ENCODE measurements at regions of chr3 and their contacts with region 1.

Region 1: GRCh38 chr3:112136959-112137693 is 4.1 kb upstream of the GCSAM start:
- DNase-seq: peak; percentile 49
- ATAC-seq: peak; percentile 88
- H3K4me3 ChIP-seq: no peak overlapping the region
- H3K27ac ChIP-seq: no peak overlapping the region
- H3K4me1 ChIP-seq: no peaks in the 10 kb centered on the region; a peak in 1 of 4 replicates
- H3K27me3 ChIP-seq: no peaks in the 10 kb centered on the region
- CTCF ChIP-seq: peak; percentile 66 to 81 (median 78); a peak in 5 of 6 replicates
- POLR2A ChIP-seq: no peak
- RAD21 ChIP-seq: peak; percentile 83

Region 2: DNA sequence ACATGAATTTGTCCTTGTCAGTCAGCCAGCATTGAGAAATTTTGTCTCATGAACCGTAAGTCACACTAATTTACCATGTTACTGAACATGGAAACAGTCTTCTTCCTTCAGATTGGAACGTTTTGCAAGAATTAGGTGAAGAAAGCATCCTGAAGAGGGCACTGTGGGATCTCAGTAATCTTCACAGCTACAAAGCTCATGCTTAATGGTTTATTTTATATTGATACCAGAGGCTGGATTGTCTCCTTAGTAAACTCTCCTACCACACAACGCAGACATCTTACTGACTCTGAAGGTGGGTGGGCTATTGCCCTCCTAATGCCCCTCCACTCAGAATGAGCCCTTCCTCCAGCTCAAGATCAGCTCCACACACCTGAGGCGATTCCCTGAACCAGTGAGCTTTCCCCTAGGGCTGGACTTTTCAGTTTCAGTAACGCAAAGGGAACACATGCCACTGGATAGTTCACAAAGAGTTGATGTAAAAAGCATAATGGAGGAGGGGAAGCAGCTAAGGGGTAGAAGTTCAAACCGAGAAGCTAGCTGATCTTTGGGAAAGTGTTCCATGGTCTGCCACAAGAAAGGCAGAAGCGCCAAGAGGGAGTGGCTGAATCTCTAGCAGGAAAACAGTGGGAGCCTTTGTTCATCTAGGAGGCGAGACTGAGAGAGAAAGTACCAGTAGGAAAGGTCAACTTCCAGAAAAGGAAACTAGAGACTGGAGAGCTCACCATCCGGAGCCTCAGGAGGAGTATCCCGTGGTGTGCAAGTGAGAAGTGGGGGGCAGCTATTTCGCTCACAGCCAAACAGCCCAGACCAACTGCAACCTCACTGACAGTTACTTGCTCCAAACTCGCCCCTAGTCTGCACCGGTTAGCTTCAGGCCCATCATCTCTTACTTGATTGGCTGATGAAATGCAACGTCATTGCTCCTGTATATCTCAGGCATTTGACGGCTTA is 156.5 kb after region 1 on chr3 and contains the start of gene SLC9C1:
- CTCF ChIA-PET with region 1: interaction called, 11 read pairs
- POLR2A ChIA-PET with region 1: interaction called, 6 read pairs
- RAD21 ChIA-PET with region 1: interaction called in 1 of 2 experiments, 4 read pairs
- intact Hi-C with region 1: no loop called
- DNase-seq: peak; percentile 69
- ATAC-seq: peak; percentile 89
- H3K4me3 ChIP-seq: peak within 1 kb of the TSS; percentile 30 to 54
- H3K27ac ChIP-seq: peak within 1 kb of the TSS; percentile 50
- H3K4me1 ChIP-seq: peaks cover 7 to 21% of the 10 kb centered on the region in 2 experiments
- H3K27me3 ChIP-seq: no peaks in the 10 kb centered on the region
- CTCF ChIP-seq: peak; percentile 52 to 67 (median 57); a peak in 5 of 6 replicates
- POLR2A ChIP-seq: peak; percentile 54
- RAD21 ChIP-seq: peak; percentile 80
- total RNA-seq, gene SLC9C1: 0.79 TPM

Region 3: GRCh38 chr3:112327371-112327951 is 190.3 kb after region 1 on chr3:
- CTCF ChIA-PET with region 1: no interaction called
- POLR2A ChIA-PET with region 1: no interaction called
- RAD21 ChIA-PET with region 1: no interaction called
- intact Hi-C with region 1: loop called (anchors 5 kb)
- DNase-seq: peak; percentile 55
- ATAC-seq: peak; percentile 99
- H3K4me3 ChIP-seq: no peak overlapping the region
- H3K27ac ChIP-seq: no peak overlapping the region
- H3K4me1 ChIP-seq: no peaks in the 10 kb centered on the region
- H3K27me3 ChIP-seq: no peaks in the 10 kb centered on the region
- CTCF ChIP-seq: peak; percentile 66 to 76 (median 67)
- POLR2A ChIP-seq: no peak
- RAD21 ChIP-seq: peak; percentile 78

Region 4: GRCh38 chr3:112437146-112438022 is 300.3 kb after region 1 on chr3:
- CTCF ChIA-PET with region 1: interaction called, 23 read pairs
- POLR2A ChIA-PET with region 1: no interaction called
- RAD21 ChIA-PET with region 1: no interaction called
- intact Hi-C with region 1: loop called (anchors 2 kb)
- DNase-seq: peak; percentile 19
- ATAC-seq: peak; percentile 98
- H3K4me3 ChIP-seq: no peak overlapping the region
- H3K27ac ChIP-seq: no peak overlapping the region
- H3K4me1 ChIP-seq: no peaks in the 10 kb centered on the region
- H3K27me3 ChIP-seq: no peaks in the 10 kb centered on the region
- CTCF ChIP-seq: peak; percentile 56 to 62 (median 61); a peak in 5 of 6 replicates
- POLR2A ChIP-seq: no peak
- RAD21 ChIP-seq: peak; percentile 71

Region 5: GRCh38 chr3:112519424-112520001 is 382.4 kb after region 1 on chr3:
- CTCF ChIA-PET with region 1: interaction called, 5 read pairs
- POLR2A ChIA-PET with region 1: no interaction called
- RAD21 ChIA-PET with region 1: no interaction called
- intact Hi-C with region 1: loop called (anchors 1 kb)
- DNase-seq: peak; percentile 51
- ATAC-seq: peak; percentile 90
- H3K4me3 ChIP-seq: no peak overlapping the region
- H3K27ac ChIP-seq: no peak overlapping the region
- H3K4me1 ChIP-seq: no peaks in the 10 kb centered on the region
- H3K27me3 ChIP-seq: no peaks in the 10 kb centered on the region
- CTCF ChIP-seq: peak; percentile 68 to 76 (median 69)
- POLR2A ChIP-seq: no peak
- RAD21 ChIP-seq: peak; percentile 83

Region 6: GRCh38 chr3:112531358-112531781 is 394.2 kb after region 1 on chr3:
- CTCF ChIA-PET with region 1: interaction called, 5 read pairs
- POLR2A ChIA-PET with region 1: no interaction called
- RAD21 ChIA-PET with region 1: no interaction called
- intact Hi-C with region 1: loop called (anchors 1 kb)
- DNase-seq: peak; percentile 6
- ATAC-seq: no peak
- H3K4me3 ChIP-seq: no peak overlapping the region
- H3K27ac ChIP-seq: no peak overlapping the region
- H3K4me1 ChIP-seq: no peaks in the 10 kb centered on the region
- H3K27me3 ChIP-seq: no peaks in the 10 kb centered on the region
- CTCF ChIP-seq: peak in 2 of 3 experiments; percentile 31 to 73; a peak in 3 of 6 replicates
- POLR2A ChIP-seq: no peak
- RAD21 ChIP-seq: peak; percentile 35; the same call in 1 of the 2 replicates

Measured in HCT116 (cell line).